ENCODE measurements at regions of chrX and their contacts with region 1.

Region 1: GRCh38 chrX:64842492-64842891 is 133.8 kb downstream of the ZC4H2 start:
- DNase-seq: peak; percentile 91
- H3K4me3 ChIP-seq: peak overlapping the region; percentile 57
- H3K27ac ChIP-seq: peak overlapping the region; percentile 100
- H3K4me1 ChIP-seq: peaks cover 35% of the 10 kb centered on the region
- CTCF ChIP-seq: no peak

Region 2: DNA sequence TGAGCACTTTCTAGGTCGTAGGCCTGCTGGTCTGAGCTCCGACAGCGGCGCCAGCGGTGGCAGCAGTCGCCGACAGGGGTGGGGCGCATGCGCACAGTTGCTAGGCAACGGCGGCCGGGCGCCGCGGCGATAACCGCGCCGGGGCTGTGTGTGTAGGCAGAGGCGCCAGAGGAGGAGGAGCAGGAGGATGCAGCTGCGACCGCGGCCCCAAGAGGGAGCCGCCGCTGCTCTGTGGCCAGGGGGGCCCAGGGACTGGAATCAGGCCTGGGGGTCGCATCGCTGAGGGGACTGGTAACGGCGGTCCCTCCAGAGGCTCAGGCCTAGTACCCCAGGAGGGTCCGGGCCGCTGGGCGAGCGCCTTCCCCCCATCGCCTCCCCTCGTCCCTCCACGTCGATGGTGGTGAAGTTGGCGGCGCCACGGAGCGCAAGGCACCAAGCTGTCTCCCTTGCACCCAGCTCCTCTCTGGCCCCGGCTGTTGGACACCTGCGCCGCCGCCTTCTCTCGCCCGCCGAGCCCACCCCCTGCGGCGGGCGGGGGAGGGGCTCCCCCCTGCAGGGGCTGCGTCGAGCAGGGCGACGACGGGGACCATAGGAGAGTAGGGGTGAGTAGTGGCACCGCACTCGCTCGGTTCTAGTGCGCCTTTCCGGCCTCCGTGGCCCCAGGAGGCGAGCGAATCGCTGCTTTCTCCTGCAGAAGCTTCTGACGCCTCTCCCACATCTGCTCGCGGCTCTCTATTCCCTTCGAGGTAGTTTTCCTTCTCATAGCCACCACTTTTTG is 192.4 kb after region 1 on chrX:
- CTCF ChIA-PET with region 1: no interaction called
- POLR2A ChIA-PET with region 1: no interaction called
- intact Hi-C with region 1: loop called (anchors 1 kb)
- DNase-seq: peak; percentile 87
- H3K4me3 ChIP-seq: peak within 1 kb of the TSS; percentile 80
- H3K27ac ChIP-seq: peak within 1 kb of the TSS; percentile 71
- H3K4me1 ChIP-seq: peaks cover 15% of the 10 kb centered on the region
- CTCF ChIP-seq: peak; percentile 62

Region 3: GRCh38 chrX:66046612-66047235 is 1204.2 kb after region 1 on chrX:
- CTCF ChIA-PET with region 1: no interaction called
- POLR2A ChIA-PET with region 1: no interaction called
- intact Hi-C with region 1: no loop called
- DNase-seq: peak; percentile 74
- H3K4me3 ChIP-seq: peak overlapping the region; percentile 17
- H3K27ac ChIP-seq: peak overlapping the region; percentile 50
- H3K4me1 ChIP-seq: peaks cover 34% of the 10 kb centered on the region
- CTCF ChIP-seq: no peak